ENCODE measurements at regions of chr4 and their contacts with region 1.

Region 1: GRCh38 chr4:185039508-185040273 is 21.4 kb downstream of the HELT start:
- DNase-seq: peak in 1 of 3 donors; percentile 60
- ATAC-seq: peak; percentile 96 to 98 (median 98)
- H3K4me3 ChIP-seq: peak overlapping the region in 1 of 3 donors; percentile 16
- H3K27ac ChIP-seq: no peak overlapping the region
- H3K4me1 ChIP-seq: peaks cover 0 to 6% (median 3%) of the 10 kb centered on the region in 4 donors
- H3K27me3 ChIP-seq: no peaks in the 10 kb centered on the region
- CTCF ChIP-seq: peak; percentile 79 to 89 (median 82)
- POLR2A ChIP-seq: no peak

Region 2: DNA sequence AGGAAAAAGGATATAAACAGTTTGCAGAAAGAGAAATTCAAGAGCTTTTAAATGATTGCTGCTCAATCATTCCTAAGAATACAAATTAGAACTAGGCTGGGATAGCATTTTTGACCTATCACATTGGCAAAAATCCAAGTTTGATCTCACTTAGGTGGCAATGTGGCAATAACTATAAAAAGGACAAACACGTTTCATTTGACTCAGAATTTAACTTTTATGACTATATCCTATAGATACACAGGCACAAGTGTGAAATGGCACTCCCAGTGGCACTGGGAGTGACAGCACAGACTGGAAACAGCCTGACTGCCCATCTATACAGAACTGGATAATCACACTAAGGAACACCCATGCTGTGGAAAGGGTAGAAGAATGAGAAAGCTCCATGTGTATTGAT is 316.9 kb before region 1 on chr4:
- intact Hi-C with region 1: no loop called
- DNase-seq: no peak
- ATAC-seq: peak in 1 of 4 donors; percentile 25
- H3K4me3 ChIP-seq: no peak overlapping the region
- H3K27ac ChIP-seq: no peak overlapping the region
- H3K4me1 ChIP-seq: no peaks in the 10 kb centered on the region
- H3K27me3 ChIP-seq: no peaks in the 10 kb centered on the region
- CTCF ChIP-seq: peak in 1 of 4 donors; percentile 5
- POLR2A ChIP-seq: no peak

Region 3: GRCh38 chr4:184924516-184924915 is 115.2 kb before region 1 on chr4:
- intact Hi-C with region 1: no loop called
- DNase-seq: no peak
- ATAC-seq: no peak
- H3K4me3 ChIP-seq: no peak overlapping the region
- H3K27ac ChIP-seq: no peak overlapping the region
- H3K4me1 ChIP-seq: no peaks in the 10 kb centered on the region
- H3K27me3 ChIP-seq: no peaks in the 10 kb centered on the region
- CTCF ChIP-seq: no peak
- POLR2A ChIP-seq: no peak

Region 4: GRCh38 chr4:185093589-185093988 is 53.9 kb after region 1 on chr4:
- intact Hi-C with region 1: loop called in 1 of 2 experiments (anchors 5 kb)
- DNase-seq: no peak
- ATAC-seq: no peak
- H3K4me3 ChIP-seq: no peak overlapping the region
- H3K27ac ChIP-seq: no peak overlapping the region
- H3K4me1 ChIP-seq: peaks cover 0 to 4% (median 0%) of the 10 kb centered on the region in 4 donors
- H3K27me3 ChIP-seq: no peaks in the 10 kb centered on the region
- CTCF ChIP-seq: no peak
- POLR2A ChIP-seq: no peak

Region 5: DNA sequence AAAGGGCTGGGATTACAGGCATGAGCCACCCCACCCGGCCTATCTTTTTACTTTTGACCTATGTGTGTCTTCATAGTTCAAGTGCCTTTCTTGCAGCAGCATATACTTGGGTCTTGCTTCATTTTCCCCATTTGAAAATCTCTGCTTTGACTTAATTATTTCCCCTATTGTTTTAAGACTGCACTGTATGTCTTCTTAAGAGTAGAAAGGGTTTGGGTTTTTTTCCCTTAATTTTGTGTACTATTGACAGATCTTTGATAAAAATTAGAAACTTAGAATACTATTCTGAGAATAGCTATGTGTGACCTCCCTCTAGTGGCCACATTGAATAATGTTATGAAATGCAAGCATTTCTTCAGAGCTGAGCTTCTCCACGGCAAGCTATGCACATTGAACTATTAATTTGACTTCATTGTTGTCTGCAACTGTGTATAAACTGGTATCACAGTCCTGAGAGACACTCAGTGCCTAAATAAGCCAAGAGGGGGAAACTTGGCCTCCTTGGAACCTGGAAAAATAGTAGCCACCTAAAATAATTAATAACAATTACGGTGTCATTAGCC is 94.7 kb after region 1 on chr4:
- intact Hi-C with region 1: loop called in 1 of 2 experiments (anchors 5 kb)
- DNase-seq: no peak
- ATAC-seq: peak; percentile 87 to 93 (median 90)
- H3K4me3 ChIP-seq: no peak overlapping the region
- H3K27ac ChIP-seq: no peak overlapping the region
- H3K4me1 ChIP-seq: no peaks in the 10 kb centered on the region
- H3K27me3 ChIP-seq: no peaks in the 10 kb centered on the region
- CTCF ChIP-seq: peak; percentile 74 to 80 (median 77)
- POLR2A ChIP-seq: no peak

Region 6: GRCh38 chr4:185209031-185209851 is 169.6 kb after region 1 on chr4 and contains the start of gene SNX25:
- intact Hi-C with region 1: no loop called
- DNase-seq: peak; percentile 94
- ATAC-seq: peak; percentile 94 to 99 (median 96)
- H3K4me3 ChIP-seq: peak within 1 kb of the TSS; percentile 54 to 73 (median 61)
- H3K27ac ChIP-seq: peak within 1 kb of the TSS; percentile 70 to 89 (median 83)
- H3K4me1 ChIP-seq: peaks cover 0 to 27% (median 6%) of the 10 kb centered on the region in 4 donors
- H3K27me3 ChIP-seq: no peaks in the 10 kb centered on the region
- CTCF ChIP-seq: peak in 2 of 4 donors; percentile 18 to 29
- POLR2A ChIP-seq: peak; percentile 93
- total RNA-seq, gene SNX25: 8.0 to 13.0 (median 10.5) TPM

Measured in right lobe of liver (tissue), 6 donors.